ENCODE measurements at regions of chr13 and their contacts with region 1.

Region 1: GRCh38 chr13:45180713-45181601 is 19.9 kb downstream of the KCTD4 start:
- DNase-seq: no peak

Region 2: GRCh38 chr13:43516401-43516833 is 1664.5 kb before region 1 on chr13:
- intact Hi-C with region 1: loop called in 1 of 2 experiments (anchors 5 kb)
- DNase-seq: no peak

Region 3: GRCh38 chr13:45194081-45194939 is 13.4 kb after region 1 on chr13:
- intact Hi-C with region 1: no loop called
- DNase-seq: peak; percentile 88

Region 4: GRCh38 chr13:45630806-45631205 is 449.8 kb after region 1 on chr13:
- intact Hi-C with region 1: no loop called
- DNase-seq: no peak

Measured in posterior vena cava (tissue), 2 donors.